ENCODE measurements at regions of chr6 and their contacts with region 1.

Region 1: GRCh38 chr6:105402939-105403935 is at the start of gene PREP:
- DNase-seq: peak; percentile 91
- ATAC-seq: peak; percentile 95
- H3K4me3 Mint-ChIP-seq: peak within 1 kb of the TSS; percentile 85
- H3K27ac Mint-ChIP-seq: peak within 1 kb of the TSS; percentile 86
- H3K4me1 Mint-ChIP-seq: peaks cover 59% of the 10 kb centered on the region
- H3K27me3 Mint-ChIP-seq: peaks cover 4% of the 10 kb centered on the region
- total RNA-seq, gene PREP: 42.3 to 49.0 TPM

Region 2: DNA sequence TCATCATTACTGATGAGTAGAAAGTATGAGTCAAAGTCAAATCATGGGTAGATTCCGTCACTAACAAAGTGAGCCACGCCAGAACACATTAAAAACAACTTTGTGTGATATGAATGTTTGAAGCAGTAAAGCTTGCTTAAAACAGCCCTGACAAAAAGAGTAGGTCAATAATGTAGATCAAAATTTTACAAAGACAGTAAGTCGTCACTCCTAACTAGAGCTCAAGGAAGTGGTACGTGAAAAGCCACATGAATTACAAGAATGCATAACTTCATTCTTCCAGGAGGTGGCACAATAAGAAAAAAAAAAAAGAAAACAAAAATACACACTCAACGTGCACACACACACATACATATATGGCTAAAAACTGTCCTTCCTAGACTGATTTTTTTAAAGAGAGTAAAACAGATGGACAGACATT is 613.5 kb before region 1 on chr6:
- CTCF ChIA-PET with region 1: no interaction called
- POLR2A ChIA-PET with region 1: no interaction called
- intact Hi-C with region 1: loop called in 1 of 2 experiments (anchors 5 kb)
- DNase-seq: peak; percentile 33
- ATAC-seq: peak; percentile 95
- H3K4me3 Mint-ChIP-seq: peak overlapping the region; percentile 50
- H3K27ac Mint-ChIP-seq: peak overlapping the region; percentile 95
- H3K4me1 Mint-ChIP-seq: peaks cover 33% of the 10 kb centered on the region
- H3K27me3 Mint-ChIP-seq: no peaks in the 10 kb centered on the region

Region 3: DNA sequence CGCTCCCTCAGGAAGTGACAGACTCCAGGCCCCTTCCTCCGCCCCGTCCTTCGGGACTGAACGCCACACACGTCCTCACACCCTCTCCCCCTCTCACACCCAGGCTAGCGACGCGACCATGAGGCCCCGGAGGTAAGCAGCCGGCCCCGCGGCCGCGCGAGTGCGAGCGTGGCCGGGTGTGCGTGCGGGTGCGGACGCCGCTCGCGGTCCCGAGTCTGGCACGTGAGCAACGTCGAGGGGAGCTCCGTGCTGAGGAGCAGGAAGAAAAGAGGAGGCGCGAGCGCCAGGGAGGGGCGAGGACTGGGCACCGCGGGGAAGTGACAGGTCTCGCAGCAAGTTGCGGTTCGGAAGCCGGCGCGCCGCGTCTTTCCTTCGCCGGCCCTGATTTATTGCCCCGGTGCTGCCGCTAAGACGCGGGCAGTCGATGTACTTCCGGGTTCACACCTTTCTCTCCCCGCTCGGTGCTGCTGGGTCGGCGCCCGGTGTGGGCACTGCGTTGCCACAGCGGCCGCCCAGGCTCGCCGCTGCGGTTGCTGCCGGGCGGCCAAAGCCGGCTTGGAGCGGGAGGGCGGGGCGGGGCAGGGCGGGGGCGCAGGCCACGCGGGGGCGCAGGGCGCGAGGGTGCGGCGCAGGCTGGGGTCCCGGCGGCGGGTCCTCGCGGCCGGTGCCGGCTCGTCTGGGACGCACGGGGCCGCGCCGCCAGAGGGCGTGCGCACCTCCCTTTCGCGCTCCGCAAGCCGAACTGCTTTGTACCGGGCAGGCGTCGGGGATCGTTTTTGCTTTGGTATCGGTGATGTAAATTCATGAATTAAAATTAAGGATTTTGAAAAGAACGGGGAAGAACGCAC is 462.1 kb before region 1 on chr6:
- CTCF ChIA-PET with region 1: no interaction called
- POLR2A ChIA-PET with region 1: no interaction called
- intact Hi-C with region 1: loop called in 1 of 2 experiments (anchors 10 kb)
- DNase-seq: peak; percentile 70
- ATAC-seq: peak; percentile 86
- H3K4me3 Mint-ChIP-seq: peak overlapping the region; percentile 65
- H3K27ac Mint-ChIP-seq: no peak overlapping the region
- H3K4me1 Mint-ChIP-seq: peaks cover 8% of the 10 kb centered on the region
- H3K27me3 Mint-ChIP-seq: peaks cover 39% of the 10 kb centered on the region

Region 4: DNA sequence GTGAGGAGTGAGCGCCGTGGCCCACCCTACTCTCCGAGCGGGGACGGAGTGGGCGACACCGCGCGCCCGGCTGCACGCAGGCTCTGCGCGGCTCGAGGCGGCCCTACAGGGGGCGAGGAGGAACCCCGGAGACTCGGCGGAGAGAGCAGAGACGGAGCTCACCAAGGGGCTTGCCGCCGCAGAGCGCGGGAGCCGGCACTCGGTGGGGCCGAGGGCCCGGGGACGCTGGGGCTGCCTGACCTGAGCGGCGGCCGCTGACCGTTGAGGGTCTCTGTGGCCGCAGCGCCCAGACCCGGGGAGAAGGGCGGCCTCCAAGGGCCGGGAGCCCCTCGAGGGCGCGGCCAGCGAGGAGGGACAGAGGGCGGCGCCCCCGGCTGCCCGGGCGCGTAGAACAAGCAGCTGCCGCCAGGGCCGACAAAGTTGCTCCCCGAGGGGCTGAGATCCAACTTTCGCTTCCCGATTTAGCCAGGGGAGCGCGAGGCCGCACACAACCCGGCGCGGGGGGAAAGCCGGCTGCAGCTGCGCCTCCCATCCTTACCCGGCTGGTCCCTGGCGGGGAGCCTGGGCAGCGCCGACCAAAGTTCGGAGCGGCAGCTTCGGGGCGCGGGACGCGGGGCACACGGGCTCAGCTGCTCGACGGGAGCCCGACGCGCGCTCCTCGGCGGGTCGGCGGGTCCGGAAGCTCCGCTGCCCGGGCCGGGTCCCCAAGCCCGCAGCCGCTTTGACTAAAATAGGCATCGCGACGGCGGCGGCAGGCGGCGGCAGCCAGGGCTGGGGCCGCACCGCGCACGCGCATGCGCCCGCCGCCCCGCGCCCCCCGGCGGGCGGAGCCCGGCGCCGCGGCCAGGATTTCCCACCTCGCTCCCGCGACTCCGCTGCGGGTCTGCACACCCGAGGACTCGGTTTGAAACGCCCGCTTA is 266.5 kb before region 1 on chr6:
- CTCF ChIA-PET with region 1: no interaction called
- POLR2A ChIA-PET with region 1: no interaction called
- intact Hi-C with region 1: loop called in 1 of 2 experiments (anchors 2 kb)
- DNase-seq: peak; percentile 47
- ATAC-seq: peak; percentile 73
- H3K4me3 Mint-ChIP-seq: peak overlapping the region; percentile 60
- H3K27ac Mint-ChIP-seq: no peak overlapping the region
- H3K4me1 Mint-ChIP-seq: peaks cover 7% of the 10 kb centered on the region
- H3K27me3 Mint-ChIP-seq: peaks cover 49% of the 10 kb centered on the region

Region 5: GRCh38 chr6:106325336-106326178 is 922.3 kb after region 1 on chr6 and contains the start of gene ATG5:
- CTCF ChIA-PET with region 1: no interaction called
- POLR2A ChIA-PET with region 1: no interaction called
- intact Hi-C with region 1: loop called in 1 of 2 experiments (anchors 1 kb)
- DNase-seq: peak; percentile 100
- ATAC-seq: peak; percentile 96
- H3K4me3 Mint-ChIP-seq: peak within 1 kb of the TSS; percentile 99
- H3K27ac Mint-ChIP-seq: peak within 1 kb of the TSS; percentile 98
- H3K4me1 Mint-ChIP-seq: peaks cover 39% of the 10 kb centered on the region
- H3K27me3 Mint-ChIP-seq: peaks cover 8% of the 10 kb centered on the region
- total RNA-seq, gene ATG5: 27.2 to 31.6 TPM

Measured in activated CD4-positive, alpha-beta T cell treated with anti-CD3 and anti-CD28 coated beads for 36 hours (primary cell).